ENCODE measurements at regions of chr9 and their contacts with region 1.

Region 1: GRCh38 chr9:34637356-34638137 is at the start of gene SIGMAR1:
- DNase-seq: peak; percentile 93 to 96
- H3K4me3 ChIP-seq: peak within 1 kb of the TSS; percentile 99
- H3K4me3 Mint-ChIP-seq: peak within 1 kb of the TSS; percentile 83
- H3K27ac Mint-ChIP-seq: peak within 1 kb of the TSS; percentile 64
- H3K4me1 ChIP-seq: no peaks in the 10 kb centered on the region
- H3K4me1 Mint-ChIP-seq: peaks cover 7% of the 10 kb centered on the region
- H3K27me3 ChIP-seq: no peaks in the 10 kb centered on the region
- H3K27me3 Mint-ChIP-seq: no peaks in the 10 kb centered on the region
- CTCF ChIP-seq: no peak
- total RNA-seq, gene SIGMAR1: 102 and 103 TPM in 2 replicates

Region 2: GRCh38 chr9:34611829-34612630 is 25.5 kb before region 1 on chr9 and contains the start of gene RPP25L:
- CTCF ChIA-PET with region 1: interaction called, 8 read pairs
- POLR2A ChIA-PET with region 1: no interaction called
- intact Hi-C with region 1: loop called (anchors 1 kb)
- DNase-seq: peak; percentile 81 to 90
- H3K4me3 ChIP-seq: peak within 1 kb of the TSS; percentile 92
- H3K4me3 Mint-ChIP-seq: peak within 1 kb of the TSS; percentile 86
- H3K27ac Mint-ChIP-seq: peak within 1 kb of the TSS; percentile 91
- H3K4me1 ChIP-seq: peaks cover 7% of the 10 kb centered on the region
- H3K4me1 Mint-ChIP-seq: no peaks in the 10 kb centered on the region
- H3K27me3 ChIP-seq: no peaks in the 10 kb centered on the region
- H3K27me3 Mint-ChIP-seq: no peaks in the 10 kb centered on the region
- CTCF ChIP-seq: no peak
- total RNA-seq, gene RPP25L: 26.2 and 27.4 TPM in 2 replicates

Region 3: GRCh38 chr9:34620061-34620994 is 17.2 kb before region 1 on chr9 and contains the start of gene DCTN3:
- CTCF ChIA-PET with region 1: interaction called, 14 read pairs
- POLR2A ChIA-PET with region 1: no interaction called
- intact Hi-C with region 1: no loop called
- DNase-seq: peak; percentile 90 to 93
- H3K4me3 ChIP-seq: peak within 1 kb of the TSS; percentile 53
- H3K4me3 Mint-ChIP-seq: peak within 1 kb of the TSS; percentile 73
- H3K27ac Mint-ChIP-seq: peak within 1 kb of the TSS; percentile 83
- H3K4me1 ChIP-seq: peaks cover 7% of the 10 kb centered on the region; the same call in 1 of the 2 replicates
- H3K4me1 Mint-ChIP-seq: peaks cover 8% of the 10 kb centered on the region
- H3K27me3 ChIP-seq: no peaks in the 10 kb centered on the region; the same call in 1 of the 2 replicates
- H3K27me3 Mint-ChIP-seq: no peaks in the 10 kb centered on the region
- CTCF ChIP-seq: no peak
- total RNA-seq, gene DCTN3: 66.1 and 70.0 TPM in 2 replicates

Region 4: GRCh38 chr9:34651876-34652601 is 14.5 kb after region 1 on chr9 and contains the start of gene IL11RA:
- CTCF ChIA-PET with region 1: interaction called, 25 read pairs
- POLR2A ChIA-PET with region 1: interaction called, 11 read pairs
- intact Hi-C with region 1: loop called (anchors 1 kb)
- DNase-seq: peak; percentile 97 to 98
- H3K4me3 ChIP-seq: peak within 1 kb of the TSS; percentile 31
- H3K4me3 Mint-ChIP-seq: peak within 1 kb of the TSS; percentile 66
- H3K27ac Mint-ChIP-seq: peak within 1 kb of the TSS; percentile 62
- H3K4me1 ChIP-seq: peaks cover 30% of the 10 kb centered on the region
- H3K4me1 Mint-ChIP-seq: peaks cover 30% of the 10 kb centered on the region
- H3K27me3 ChIP-seq: no peaks in the 10 kb centered on the region
- H3K27me3 Mint-ChIP-seq: no peaks in the 10 kb centered on the region
- CTCF ChIP-seq: peak in 1 of 2 experiments; percentile 20
- total RNA-seq, gene IL11RA: 5.6 and 7.1 TPM in 2 replicates

Measured in Caco-2 (cell line).